WTC11 (cell line): ENCODE measurements at regions of chr15 and their contacts with region 1.

Region 1: GRCh38 chr15:66323312-66323928 is 30.1 kb downstream of the DIS3L start:
- DNase-seq: no peak
- ATAC-seq: peak; percentile 52
- H3K4me3 Mint-ChIP-seq: no peak overlapping the region
- H3K27ac Mint-ChIP-seq: peak overlapping the region; percentile 82
- H3K4me1 Mint-ChIP-seq: no peaks in the 10 kb centered on the region
- H3K27me3 Mint-ChIP-seq: no peaks in the 10 kb centered on the region
- CTCF ChIP-seq: no peak

Region 2: DNA sequence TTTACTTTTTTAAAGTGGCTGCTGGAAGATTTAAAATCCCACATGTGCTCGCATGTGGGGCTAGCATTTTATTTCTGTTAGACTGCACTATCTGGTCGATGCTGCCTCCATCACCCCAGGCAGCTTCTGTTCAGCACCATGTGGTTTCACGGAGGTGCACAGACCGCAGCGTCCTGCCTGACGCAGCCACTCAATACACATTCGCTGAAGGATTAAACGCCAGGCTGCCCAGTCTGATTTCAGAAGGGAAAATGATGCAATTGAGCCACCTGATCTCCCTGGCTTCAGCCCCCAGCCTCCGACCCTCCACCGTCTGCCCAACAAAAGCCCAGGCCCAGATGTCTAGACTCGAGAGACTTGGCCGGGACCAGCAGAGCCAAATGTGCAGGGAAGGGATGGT is 154.4 kb before region 1 on chr15:
- CTCF ChIA-PET with region 1: no interaction called
- POLR2A ChIA-PET with region 1: no interaction called
- DNase-seq: no peak
- ATAC-seq: no peak
- H3K4me3 Mint-ChIP-seq: no peak overlapping the region
- H3K27ac Mint-ChIP-seq: no peak overlapping the region
- H3K4me1 Mint-ChIP-seq: peaks cover 30% of the 10 kb centered on the region
- H3K27me3 Mint-ChIP-seq: no peaks in the 10 kb centered on the region
- CTCF ChIP-seq: no peak

Region 3: GRCh38 chr15:66356345-66357236 is 33.2 kb after region 1 on chr15 and contains the start of gene TIPIN:
- CTCF ChIA-PET with region 1: no interaction called
- POLR2A ChIA-PET with region 1: interaction called, 10 read pairs
- DNase-seq: peak; percentile 94
- ATAC-seq: peak; percentile 96
- H3K4me3 Mint-ChIP-seq: peak within 1 kb of the TSS; percentile 89
- H3K27ac Mint-ChIP-seq: peak within 1 kb of the TSS; percentile 86
- H3K4me1 Mint-ChIP-seq: peaks cover 13% of the 10 kb centered on the region
- H3K27me3 Mint-ChIP-seq: no peaks in the 10 kb centered on the region
- CTCF ChIP-seq: no peak
- total RNA-seq, gene TIPIN: 17.6 to 22.2 TPM (median 19.2 TPM) in 3 replicates

Region 4: DNA sequence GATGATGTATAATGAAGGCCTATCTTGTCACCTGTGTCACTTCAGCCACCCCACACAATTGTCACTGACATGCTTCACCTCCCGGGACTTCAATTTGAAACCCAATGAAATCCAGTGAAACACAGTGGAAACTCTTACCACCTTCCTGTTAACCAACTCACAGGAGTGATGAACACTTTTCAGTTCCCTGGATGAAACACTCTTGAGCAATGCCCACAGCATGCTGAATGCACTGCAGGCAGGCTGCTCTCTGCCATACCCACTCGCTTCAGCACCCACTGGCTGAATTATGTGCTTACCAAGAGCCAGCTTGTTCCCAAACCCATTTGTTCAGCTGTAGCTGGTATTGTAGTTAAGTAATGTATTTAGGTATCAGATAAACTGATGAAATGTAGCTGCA is 110.3 kb after region 1 on chr15:
- CTCF ChIA-PET with region 1: no interaction called
- POLR2A ChIA-PET with region 1: no interaction called
- DNase-seq: no peak
- ATAC-seq: no peak
- H3K4me3 Mint-ChIP-seq: no peak overlapping the region
- H3K27ac Mint-ChIP-seq: peak overlapping the region; percentile 6; the same call in 1 of the 2 replicates
- H3K4me1 Mint-ChIP-seq: peaks cover 41% of the 10 kb centered on the region
- H3K27me3 Mint-ChIP-seq: no peaks in the 10 kb centered on the region
- CTCF ChIP-seq: no peak